ENCODE measurements at regions of chr6 and their contacts with region 1.

Region 1: DNA sequence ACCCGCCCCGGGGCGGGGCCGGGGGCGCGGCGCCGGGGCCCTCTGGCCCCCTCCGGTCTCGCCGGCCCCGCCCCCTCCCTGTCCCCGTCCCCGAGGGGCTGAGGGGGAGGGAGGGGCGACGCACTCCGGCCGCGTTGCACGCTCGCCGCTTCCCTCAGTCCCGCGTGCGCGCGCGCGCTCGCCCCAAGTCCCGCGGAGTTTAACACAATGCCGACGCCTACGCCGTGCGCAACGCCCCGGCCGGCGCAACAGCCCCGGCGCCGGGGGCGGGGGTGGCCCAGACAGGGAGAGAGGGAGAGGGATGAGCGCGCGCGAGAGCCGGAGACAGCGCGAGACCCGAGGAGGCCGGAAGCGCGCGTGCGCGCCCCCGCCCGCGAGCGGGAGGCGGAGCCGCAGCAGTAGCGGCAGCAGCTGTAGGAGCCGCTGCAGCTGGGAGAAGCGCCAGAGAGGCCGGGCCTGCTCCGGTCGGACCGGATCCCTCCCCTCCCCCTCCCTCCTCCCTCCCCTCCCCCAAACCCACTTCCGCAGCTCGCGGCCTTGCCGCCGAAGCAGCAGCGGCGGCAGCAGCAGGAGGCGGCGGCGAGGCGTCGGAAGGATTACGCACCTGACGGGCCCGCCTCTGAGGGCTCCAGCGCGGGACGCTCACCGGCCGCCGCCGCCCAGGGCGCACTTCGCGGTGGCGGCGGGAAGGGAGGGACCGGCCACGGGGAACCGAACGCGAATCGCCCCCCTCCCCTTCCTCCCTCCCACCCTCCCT is 905 bp downstream of the ZBTB2 start:
- DNase-seq: peak; percentile 92 to 100 (median 96)
- ATAC-seq: peak; percentile 73
- H3K4me3 ChIP-seq: peak overlapping the region; percentile 66
- H3K4me3 Mint-ChIP-seq: peak overlapping the region; percentile 95
- H3K27ac ChIP-seq: peak overlapping the region; percentile 69 to 99
- H3K27ac Mint-ChIP-seq: peak overlapping the region; percentile 97
- H3K4me1 ChIP-seq: peaks cover 54% of the 10 kb centered on the region
- H3K4me1 Mint-ChIP-seq: peaks cover 76% of the 10 kb centered on the region
- H3K27me3 ChIP-seq: no peaks in the 10 kb centered on the region
- H3K27me3 Mint-ChIP-seq: peaks cover 4% of the 10 kb centered on the region
- CTCF ChIP-seq: no peak

Region 2: GRCh38 chr6:149545754-149546528 is 1844.5 kb before region 1 on chr6 and contains the start of gene PPIL4:
- CTCF ChIA-PET with region 1: no interaction called
- POLR2A ChIA-PET with region 1: no interaction called
- intact Hi-C with region 1: loop called in 1 of 2 experiments (anchors 10 kb)
- DNase-seq: peak; percentile 93 to 99 (median 96)
- ATAC-seq: peak; percentile 82
- H3K4me3 ChIP-seq: peak within 1 kb of the TSS; percentile 69
- H3K4me3 Mint-ChIP-seq: peak within 1 kb of the TSS; percentile 99
- H3K27ac ChIP-seq: peak within 1 kb of the TSS; percentile 98 to 99
- H3K27ac Mint-ChIP-seq: peak within 1 kb of the TSS; percentile 96
- H3K4me1 ChIP-seq: peaks cover 21% of the 10 kb centered on the region
- H3K4me1 Mint-ChIP-seq: peaks cover 37% of the 10 kb centered on the region
- H3K27me3 ChIP-seq: no peaks in the 10 kb centered on the region
- H3K27me3 Mint-ChIP-seq: no peaks in the 10 kb centered on the region
- CTCF ChIP-seq: peak; percentile 99
- total RNA-seq, gene PPIL4: 51.8 to 53.5 TPM

Region 3: DNA sequence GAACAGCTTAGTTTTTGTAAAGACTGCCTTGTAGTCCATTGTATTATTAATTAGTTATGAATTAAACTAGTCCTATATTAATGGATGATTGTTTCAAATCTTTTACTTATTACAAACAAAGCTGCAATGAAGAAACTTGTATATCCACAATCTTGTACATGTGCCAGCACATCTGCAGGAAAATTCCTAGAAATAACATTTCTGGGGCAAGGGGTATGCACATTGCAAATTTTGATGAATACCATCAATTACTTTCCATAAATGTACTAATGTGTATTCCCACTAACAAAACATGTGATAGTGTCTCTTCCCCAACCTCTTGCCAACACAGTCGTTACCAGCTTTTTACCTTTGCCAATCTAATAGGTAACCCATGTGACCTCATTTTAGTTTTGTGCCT is 224.3 kb before region 1 on chr6:
- CTCF ChIA-PET with region 1: no interaction called
- POLR2A ChIA-PET with region 1: no interaction called
- intact Hi-C with region 1: no loop called
- DNase-seq: no peak
- ATAC-seq: no peak
- H3K4me3 ChIP-seq: no peak overlapping the region
- H3K4me3 Mint-ChIP-seq: no peak overlapping the region
- H3K27ac ChIP-seq: no peak overlapping the region
- H3K27ac Mint-ChIP-seq: no peak overlapping the region
- H3K4me1 ChIP-seq: no peaks in the 10 kb centered on the region
- H3K4me1 Mint-ChIP-seq: no peaks in the 10 kb centered on the region
- H3K27me3 ChIP-seq: no peaks in the 10 kb centered on the region
- H3K27me3 Mint-ChIP-seq: peaks cover 4% of the 10 kb centered on the region
- CTCF ChIP-seq: no peak

Region 4: GRCh38 chr6:151349651-151350282 is 40.7 kb before region 1 on chr6:
- CTCF ChIA-PET with region 1: interaction called, 3 read pairs
- POLR2A ChIA-PET with region 1: interaction called, 10 read pairs
- intact Hi-C with region 1: no loop called
- DNase-seq: no peak
- ATAC-seq: no peak
- H3K4me3 ChIP-seq: no peak overlapping the region
- H3K4me3 Mint-ChIP-seq: no peak overlapping the region
- H3K27ac ChIP-seq: no peak overlapping the region
- H3K27ac Mint-ChIP-seq: no peak overlapping the region
- H3K4me1 ChIP-seq: peaks cover 11% of the 10 kb centered on the region
- H3K4me1 Mint-ChIP-seq: no peaks in the 10 kb centered on the region
- H3K27me3 ChIP-seq: no peaks in the 10 kb centered on the region
- H3K27me3 Mint-ChIP-seq: no peaks in the 10 kb centered on the region
- CTCF ChIP-seq: no peak

Region 5: GRCh38 chr6:151370509-151371078 is 19.9 kb before region 1 on chr6:
- CTCF ChIA-PET with region 1: interaction called, 3 read pairs
- POLR2A ChIA-PET with region 1: interaction called, 102 read pairs
- intact Hi-C with region 1: loop called (anchors 1 to 2 kb)
- DNase-seq: no peak
- ATAC-seq: no peak
- H3K4me3 ChIP-seq: no peak overlapping the region
- H3K4me3 Mint-ChIP-seq: no peak overlapping the region
- H3K27ac ChIP-seq: no peak overlapping the region
- H3K27ac Mint-ChIP-seq: peak overlapping the region; percentile 70
- H3K4me1 ChIP-seq: peaks cover 36% of the 10 kb centered on the region
- H3K4me1 Mint-ChIP-seq: peaks cover 42% of the 10 kb centered on the region
- H3K27me3 ChIP-seq: no peaks in the 10 kb centered on the region
- H3K27me3 Mint-ChIP-seq: no peaks in the 10 kb centered on the region
- CTCF ChIP-seq: no peak

Region 6: DNA sequence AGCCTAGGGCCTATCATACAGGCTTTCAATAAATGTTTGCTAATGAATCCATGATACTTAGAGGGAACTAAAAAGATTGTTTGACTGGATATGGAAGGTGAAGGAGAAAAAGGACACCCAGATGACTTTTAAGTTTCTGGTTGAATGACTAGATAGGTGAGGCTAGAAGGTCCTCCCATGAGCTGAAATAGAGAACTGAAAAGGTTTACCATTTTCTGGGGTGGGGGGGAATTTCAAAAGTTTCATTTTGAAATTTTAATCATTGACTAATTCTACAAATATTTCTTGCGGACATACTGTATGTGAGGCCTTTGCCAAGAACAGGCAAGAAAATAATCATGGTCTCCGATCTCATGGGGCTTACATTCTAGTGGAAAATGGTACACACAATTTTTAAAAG is 18.8 kb after region 1 on chr6:
- CTCF ChIA-PET with region 1: interaction called, 33 read pairs
- POLR2A ChIA-PET with region 1: interaction called, 31 read pairs
- intact Hi-C with region 1: loop called in 1 of 2 experiments (anchors 2 kb)
- DNase-seq: no peak
- ATAC-seq: no peak
- H3K4me3 ChIP-seq: no peak overlapping the region
- H3K4me3 Mint-ChIP-seq: no peak overlapping the region
- H3K27ac ChIP-seq: no peak overlapping the region
- H3K27ac Mint-ChIP-seq: peak overlapping the region; percentile 4
- H3K4me1 ChIP-seq: peaks cover 15% of the 10 kb centered on the region
- H3K4me1 Mint-ChIP-seq: peaks cover 44% of the 10 kb centered on the region
- H3K27me3 ChIP-seq: no peaks in the 10 kb centered on the region
- H3K27me3 Mint-ChIP-seq: no peaks in the 10 kb centered on the region
- CTCF ChIP-seq: no peak

Region 7: DNA sequence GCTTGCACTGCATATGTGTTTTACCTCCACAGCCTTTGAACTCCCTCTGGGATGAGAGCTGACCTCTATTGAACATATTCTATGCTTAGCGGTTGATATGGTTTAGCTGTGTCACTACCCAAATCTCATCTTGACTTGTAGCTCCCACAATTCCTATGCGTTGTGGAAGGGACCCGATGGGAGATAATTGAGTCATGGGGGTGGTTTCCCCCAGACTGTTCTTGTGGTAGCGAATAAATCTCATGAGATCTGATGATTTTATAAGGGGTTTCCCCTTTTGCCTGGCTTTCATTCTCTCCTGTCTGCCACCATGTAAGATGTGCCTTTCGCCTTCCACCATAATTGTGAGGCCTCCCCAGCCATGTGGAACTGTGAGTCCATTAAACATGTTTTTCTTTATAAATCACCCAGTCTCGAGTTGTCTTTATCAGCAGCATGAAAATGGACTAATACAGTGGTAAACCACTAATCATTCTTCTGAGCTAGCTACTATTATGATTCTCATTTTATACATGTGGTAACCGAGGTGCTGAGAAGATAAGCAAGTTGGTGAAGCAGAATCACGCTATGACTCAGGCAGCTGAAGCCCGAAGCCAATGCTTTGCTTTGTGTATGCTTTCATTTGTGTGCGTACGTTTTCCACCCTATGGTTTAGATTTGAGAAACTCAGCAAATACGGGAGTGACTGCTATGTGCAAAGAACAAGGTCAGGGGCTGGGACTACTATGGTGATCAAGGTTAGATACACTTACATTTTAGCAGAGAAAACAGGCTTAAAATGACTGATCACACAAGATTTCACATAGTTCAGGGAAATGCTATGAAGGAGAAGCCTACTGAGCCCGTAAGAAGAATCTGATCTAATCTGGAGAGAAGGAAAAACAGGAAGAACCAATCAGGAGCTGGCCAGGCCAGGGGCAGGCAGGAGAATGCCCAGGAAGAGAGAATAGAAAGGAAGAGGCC is 780.5 kb after region 1 on chr6:
- CTCF ChIA-PET with region 1: no interaction called
- POLR2A ChIA-PET with region 1: no interaction called
- intact Hi-C with region 1: loop called in 1 of 2 experiments (anchors 10 kb)
- DNase-seq: peak in 9 of 14 experiments; percentile 19 to 80 (median 41)
- ATAC-seq: peak; percentile 85
- H3K4me3 ChIP-seq: peak overlapping the region; percentile 26
- H3K4me3 Mint-ChIP-seq: peak overlapping the region; percentile 62
- H3K27ac ChIP-seq: peak overlapping the region; percentile 46 to 80
- H3K27ac Mint-ChIP-seq: peak overlapping the region; percentile 91
- H3K4me1 ChIP-seq: peaks cover 29% of the 10 kb centered on the region
- H3K4me1 Mint-ChIP-seq: peaks cover 74% of the 10 kb centered on the region
- H3K27me3 ChIP-seq: no peaks in the 10 kb centered on the region
- H3K27me3 Mint-ChIP-seq: no peaks in the 10 kb centered on the region
- CTCF ChIP-seq: no peak

Region 8: GRCh38 chr6:152982768-152983636 is 1592.5 kb after region 1 on chr6 and contains the start of gene FBXO5:
- CTCF ChIA-PET with region 1: no interaction called
- POLR2A ChIA-PET with region 1: interaction called, 4 read pairs
- intact Hi-C with region 1: loop called in 1 of 2 experiments (anchors 10 kb)
- DNase-seq: peak; percentile 93 to 99 (median 96)
- ATAC-seq: peak; percentile 93
- H3K4me3 ChIP-seq: peak within 1 kb of the TSS; percentile 97
- H3K4me3 Mint-ChIP-seq: peak within 1 kb of the TSS; percentile 99
- H3K27ac ChIP-seq: peak within 1 kb of the TSS; percentile 81 to 93
- H3K27ac Mint-ChIP-seq: peak within 1 kb of the TSS; percentile 98
- H3K4me1 ChIP-seq: peaks cover 34% of the 10 kb centered on the region
- H3K4me1 Mint-ChIP-seq: peaks cover 52% of the 10 kb centered on the region
- H3K27me3 ChIP-seq: no peaks in the 10 kb centered on the region
- H3K27me3 Mint-ChIP-seq: no peaks in the 10 kb centered on the region
- CTCF ChIP-seq: no peak
- total RNA-seq, gene FBXO5: 3.0 to 3.3 TPM